GM12878 (cell line): ENCODE measurements at regions of chr18 and their contacts with region 1.

Region 1: DNA sequence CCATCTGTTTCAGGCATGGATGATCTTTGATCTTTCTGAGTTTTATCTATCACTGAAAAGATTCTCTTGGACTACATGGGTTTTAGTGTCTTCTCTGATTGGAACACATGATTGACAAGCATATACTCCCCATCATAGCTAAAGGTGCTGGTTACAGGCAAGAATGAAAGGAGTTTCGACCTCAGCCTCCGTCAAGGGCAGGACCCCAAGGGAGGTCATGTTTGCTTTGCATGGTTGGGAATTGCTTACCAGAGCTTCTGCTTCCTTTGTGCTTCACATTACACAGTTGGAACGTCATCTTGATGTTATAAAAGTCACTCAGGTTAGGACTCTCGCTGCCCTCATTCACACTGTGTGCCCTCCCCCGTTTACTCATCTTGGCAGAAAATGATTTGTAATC is 287.7 kb downstream of the PIK3C3 start:
- DNase-seq: no peak
- ATAC-seq: peak; percentile 84
- H3K4me3 ChIP-seq: no peak overlapping the region
- H3K27ac ChIP-seq: no peak overlapping the region
- H3K4me1 ChIP-seq: no peaks in the 10 kb centered on the region
- H3K27me3 ChIP-seq: no peaks in the 10 kb centered on the region
- CTCF ChIP-seq: no peak
- EP300 ChIP-seq: no peak
- POLR2A ChIP-seq: no peak
- RAD21 ChIP-seq: no peak

Region 2: DNA sequence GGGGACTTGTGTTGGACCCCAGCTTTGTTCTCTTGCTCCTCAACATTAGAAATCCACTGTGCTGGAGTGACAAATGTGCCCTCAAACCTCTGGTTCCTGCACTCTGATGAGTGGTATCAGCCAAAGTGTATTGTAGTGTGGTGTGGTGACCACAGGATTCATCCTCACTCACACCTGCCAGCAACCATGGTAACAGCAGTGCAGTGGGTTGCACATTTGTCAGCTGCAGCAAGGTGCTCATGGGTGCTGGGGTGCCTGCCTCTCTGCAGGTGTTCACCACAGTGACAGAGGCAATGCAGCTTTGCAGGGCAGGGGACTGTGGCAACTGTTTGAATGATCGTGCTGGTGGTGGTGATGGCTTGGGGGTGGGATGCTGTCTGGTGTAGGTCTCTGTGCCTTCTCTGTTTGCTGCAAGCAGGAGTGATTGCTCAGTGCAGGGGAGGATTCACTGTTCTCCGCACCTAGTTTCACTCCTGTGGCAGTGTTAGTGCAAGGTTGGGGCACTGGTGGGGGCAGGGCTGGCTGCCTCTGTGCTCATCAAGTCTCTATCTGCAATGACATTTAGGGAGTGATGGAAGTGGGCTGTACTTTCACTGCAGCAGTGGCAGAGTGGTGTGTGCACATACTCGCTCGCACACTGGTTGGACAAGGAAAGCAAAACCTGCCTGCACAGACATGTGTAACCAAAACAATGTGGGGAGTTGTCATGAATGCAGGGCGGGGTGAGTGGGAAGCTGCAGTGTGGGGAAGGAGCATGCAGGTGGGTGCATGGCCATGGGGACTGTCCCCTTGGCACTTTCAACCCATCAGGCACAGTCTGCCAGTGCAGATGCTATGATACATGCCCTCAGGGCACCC is 13.4 kb after region 1 on chr18:
- CTCF ChIA-PET with region 1: interaction called, 4 read pairs
- POLR2A ChIA-PET with region 1: interaction called, 3 read pairs
- RAD21 ChIA-PET with region 1: interaction called, 3 read pairs
- SMC1A ChIA-PET with region 1: interaction called, 31 read pairs
- in situ Hi-C with region 1: no loop called
- intact Hi-C with region 1: no loop called
- DNase-seq: no peak
- ATAC-seq: peak; percentile 66
- H3K4me3 ChIP-seq: no peak overlapping the region
- H3K27ac ChIP-seq: no peak overlapping the region
- H3K4me1 ChIP-seq: no peaks in the 10 kb centered on the region
- H3K27me3 ChIP-seq: no peaks in the 10 kb centered on the region; a peak in 1 of 4 replicates
- CTCF ChIP-seq: no peak
- EP300 ChIP-seq: no peak
- POLR2A ChIP-seq: no peak
- RAD21 ChIP-seq: no peak

Region 3: DNA sequence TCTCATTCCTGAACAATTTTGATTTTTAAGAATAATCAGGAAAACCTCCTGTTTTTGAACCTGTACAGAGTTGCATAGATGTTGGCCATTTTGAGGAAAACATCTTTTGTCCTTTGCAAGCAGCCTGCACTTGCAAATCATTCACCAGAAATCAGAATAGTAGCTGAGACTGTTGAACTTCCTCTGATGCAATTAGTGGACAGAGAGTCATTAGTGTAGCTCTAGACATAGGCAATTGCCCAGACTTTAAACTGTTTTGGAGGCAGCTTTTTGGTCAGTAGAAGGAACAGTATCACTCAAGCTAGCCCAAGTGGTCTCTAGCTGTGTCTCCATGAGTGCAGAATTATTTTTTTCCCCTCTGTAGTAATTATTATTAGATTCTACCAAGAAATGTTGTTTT is 38.4 kb after region 1 on chr18:
- CTCF ChIA-PET with region 1: interaction called, 3 read pairs
- POLR2A ChIA-PET with region 1: interaction called, 12 read pairs
- RAD21 ChIA-PET with region 1: no interaction called
- SMC1A ChIA-PET with region 1: interaction called, 3 read pairs
- in situ Hi-C with region 1: no loop called
- intact Hi-C with region 1: no loop called
- DNase-seq: no peak
- ATAC-seq: peak; percentile 68
- H3K4me3 ChIP-seq: no peak overlapping the region
- H3K27ac ChIP-seq: no peak overlapping the region
- H3K4me1 ChIP-seq: no peaks in the 10 kb centered on the region
- H3K27me3 ChIP-seq: no peaks in the 10 kb centered on the region
- CTCF ChIP-seq: no peak
- EP300 ChIP-seq: no peak
- POLR2A ChIP-seq: no peak
- RAD21 ChIP-seq: no peak

Region 4: GRCh38 chr18:42426496-42427015 is 183.8 kb after region 1 on chr18:
- CTCF ChIA-PET with region 1: no interaction called
- POLR2A ChIA-PET with region 1: no interaction called
- RAD21 ChIA-PET with region 1: no interaction called
- SMC1A ChIA-PET with region 1: no interaction called
- in situ Hi-C with region 1: no loop called
- intact Hi-C with region 1: no loop called
- DNase-seq: no peak
- ATAC-seq: no peak
- H3K4me3 ChIP-seq: no peak overlapping the region
- H3K27ac ChIP-seq: no peak overlapping the region
- H3K4me1 ChIP-seq: no peaks in the 10 kb centered on the region
- H3K27me3 ChIP-seq: no peaks in the 10 kb centered on the region
- CTCF ChIP-seq: no peak
- EP300 ChIP-seq: no peak
- POLR2A ChIP-seq: no peak
- RAD21 ChIP-seq: no peak